ENCODE measurements at regions of chr3 and their contacts with region 1.

Region 1: DNA sequence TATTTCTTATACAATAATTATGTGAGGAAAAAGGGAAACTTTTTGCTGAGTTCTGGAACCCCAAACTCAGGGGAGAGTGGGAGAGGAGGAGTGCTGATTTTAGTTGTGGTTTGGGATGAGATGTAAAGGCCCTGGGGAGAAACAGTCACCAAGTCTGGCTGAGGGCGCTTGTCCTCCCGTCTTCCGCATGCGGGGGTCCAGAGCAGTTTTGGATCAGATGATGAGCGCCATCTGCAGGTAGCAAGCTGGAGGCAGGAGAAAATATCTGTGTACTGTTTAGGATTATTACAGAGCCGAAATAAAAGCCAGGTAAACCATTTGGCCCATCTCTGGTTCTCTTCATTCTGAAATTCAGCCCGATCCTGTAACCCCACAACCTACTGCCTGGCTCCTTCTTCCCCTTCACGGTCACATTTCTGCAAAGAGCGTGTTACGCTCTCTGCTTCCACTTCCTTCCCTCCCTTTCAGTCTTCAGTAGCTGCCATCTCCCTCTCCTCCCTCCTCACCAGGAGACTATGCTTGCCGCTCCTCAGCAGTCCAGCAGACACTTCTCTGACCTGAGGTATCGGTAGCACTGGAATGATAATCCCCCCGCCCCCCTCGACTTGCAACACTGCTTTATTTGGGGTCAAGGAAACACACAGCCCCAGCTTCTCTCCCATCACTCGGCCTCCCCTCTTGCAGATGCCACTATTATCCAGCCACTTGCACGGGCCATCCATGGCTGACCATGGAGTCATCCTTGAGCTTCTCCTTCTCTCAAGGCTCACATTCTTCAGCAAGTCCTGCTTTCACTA is 1.4 kb upstream of the PARP14 start:
- DNase-seq: peak; percentile 57 to 77 (median 73)
- H3K4me3 ChIP-seq: peak overlapping the region; percentile 27 to 97 (median 78)
- H3K4me3 Mint-ChIP-seq: peak overlapping the region; percentile 83 to 92
- H3K27ac ChIP-seq: peak overlapping the region; percentile 89 to 96
- H3K27ac Mint-ChIP-seq: peak overlapping the region; percentile 90 to 98 (median 96)
- H3K4me1 ChIP-seq: peaks cover 48 to 52% of the 10 kb centered on the region in 2 donors
- H3K4me1 Mint-ChIP-seq: peaks cover 55% of the 10 kb centered on the region
- H3K27me3 ChIP-seq: no peaks in the 10 kb centered on the region
- H3K27me3 Mint-ChIP-seq: no peaks in the 10 kb centered on the region
- CTCF ChIP-seq: peak; percentile 81

Region 2: DNA sequence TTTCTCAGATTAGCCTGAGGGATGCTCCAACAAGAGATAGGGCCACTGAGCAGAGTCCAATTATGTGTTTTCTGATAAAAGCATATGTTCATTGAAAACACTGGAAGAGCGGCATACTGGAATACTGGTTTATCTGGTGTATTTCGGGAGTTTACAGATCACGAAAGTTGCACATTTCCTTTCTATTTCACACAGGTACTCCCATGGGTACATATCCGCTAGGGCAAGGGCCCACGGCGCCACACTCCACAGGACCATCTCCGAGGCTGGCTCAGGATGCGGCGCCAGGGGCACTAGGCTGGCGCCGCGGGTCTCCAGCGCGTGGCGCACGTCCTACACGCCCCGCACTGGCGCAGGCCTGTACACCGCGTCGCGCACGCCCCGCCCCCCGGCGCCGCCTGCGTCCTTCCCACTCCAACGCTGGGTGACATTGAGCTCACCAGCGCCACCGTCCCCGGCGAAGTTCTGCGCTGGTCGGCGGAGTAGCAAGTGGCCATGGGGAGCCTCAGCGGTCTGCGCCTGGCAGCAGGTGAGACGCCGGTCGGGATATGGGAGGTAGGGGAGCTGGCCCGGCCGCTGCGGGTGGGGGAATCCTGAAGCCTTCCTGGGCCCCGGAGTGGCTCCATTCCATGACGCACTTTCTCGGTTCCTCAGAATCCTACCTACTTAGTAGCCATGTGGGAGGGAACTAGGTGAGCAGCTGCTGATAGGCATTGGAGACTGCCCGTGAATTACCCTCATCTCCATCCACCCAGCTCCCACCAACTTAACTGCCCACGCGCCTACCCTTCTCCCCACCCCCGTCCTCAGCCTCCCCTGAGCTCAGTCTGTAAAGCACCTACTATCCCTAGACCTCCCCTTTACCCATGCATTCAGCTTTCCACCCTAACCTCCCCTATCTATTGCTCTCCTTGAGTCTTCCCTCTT is 295.2 kb before region 1 on chr3 and contains the start of gene FAM162A:
- intact Hi-C with region 1: loop called in 1 of 2 experiments (anchors 10 kb)
- DNase-seq: peak; percentile 86 to 93 (median 90)
- H3K4me3 ChIP-seq: peak within 1 kb of the TSS; percentile 60 to 84 (median 68)
- H3K4me3 Mint-ChIP-seq: peak within 1 kb of the TSS; percentile 88 to 91
- H3K27ac ChIP-seq: peak within 1 kb of the TSS; percentile 85 to 86
- H3K27ac Mint-ChIP-seq: peak within 1 kb of the TSS; percentile 83 to 93 (median 92)
- H3K4me1 ChIP-seq: peaks cover 28 to 33% of the 10 kb centered on the region in 2 donors
- H3K4me1 Mint-ChIP-seq: peaks cover 24% of the 10 kb centered on the region
- H3K27me3 ChIP-seq: no peaks in the 10 kb centered on the region
- H3K27me3 Mint-ChIP-seq: peaks cover 0 to 2% (median 0%) of the 10 kb centered on the region in 3 donors
- CTCF ChIP-seq: peak; percentile 70
- polyA plus RNA-seq, gene FAM162A: 6.8 to 28.5 (median 24.2) TPM

Region 3: DNA sequence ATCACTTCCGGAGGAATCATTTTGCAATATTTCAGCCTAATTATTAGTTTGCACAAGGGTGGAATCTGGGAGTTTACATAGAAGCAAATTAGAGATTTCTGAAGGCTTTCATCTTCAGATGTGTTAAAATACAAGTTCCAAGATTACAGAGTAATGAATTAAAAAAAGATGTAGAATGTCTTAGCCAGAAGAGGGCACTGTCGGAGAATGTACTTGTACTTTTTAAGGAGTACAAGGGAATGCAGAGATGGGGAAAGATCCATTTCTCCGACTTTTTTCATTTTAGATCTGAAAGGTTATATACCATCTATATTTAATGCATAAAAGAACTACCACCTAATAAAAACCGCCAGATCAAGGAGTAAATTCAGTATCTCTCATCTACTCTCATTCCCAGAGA is 220.3 kb before region 1 on chr3:
- intact Hi-C with region 1: loop called in 1 of 2 experiments (anchors 10 kb)
- DNase-seq: peak in 2 of 3 donors; percentile 13 to 34
- H3K4me3 ChIP-seq: no peak overlapping the region
- H3K4me3 Mint-ChIP-seq: no peak overlapping the region
- H3K27ac ChIP-seq: no peak overlapping the region
- H3K27ac Mint-ChIP-seq: peak overlapping the region in 1 of 7 donors; percentile 21
- H3K4me1 ChIP-seq: no peaks in the 10 kb centered on the region
- H3K4me1 Mint-ChIP-seq: no peaks in the 10 kb centered on the region
- H3K27me3 ChIP-seq: no peaks in the 10 kb centered on the region
- H3K27me3 Mint-ChIP-seq: no peaks in the 10 kb centered on the region
- CTCF ChIP-seq: peak; percentile 67

Region 4: GRCh38 chr3:122564155-122564912 is 114.9 kb before region 1 on chr3 and contains the starts of genes DTX3L and PARP9:
- intact Hi-C with region 1: loop called (anchors 2 kb)
- DNase-seq: peak; percentile 78 to 82 (median 79)
- H3K4me3 ChIP-seq: peak within 1 kb of the TSS; percentile 98 to 99 (median 98)
- H3K4me3 Mint-ChIP-seq: peak within 1 kb of the TSS; percentile 89 to 99
- H3K27ac ChIP-seq: peak within 1 kb of the TSS; percentile 87 to 98
- H3K27ac Mint-ChIP-seq: peak within 1 kb of the TSS; percentile 90 to 97 (median 93)
- H3K4me1 ChIP-seq: peaks cover 20 to 24% of the 10 kb centered on the region in 2 donors
- H3K4me1 Mint-ChIP-seq: peaks cover 60% of the 10 kb centered on the region
- H3K27me3 ChIP-seq: no peaks in the 10 kb centered on the region
- H3K27me3 Mint-ChIP-seq: peaks cover 0 to 2% (median 1%) of the 10 kb centered on the region in 3 donors
- CTCF ChIP-seq: no peak
- polyA plus RNA-seq, gene DTX3L: 8.6 to 29.0 (median 17.7) TPM
- polyA plus RNA-seq, gene PARP9: 31.4 to 43.3 (median 34.4) TPM

Measured in CD14-positive monocyte (primary cell).